ENCODE measurements at regions of chr1 and their contacts with region 1.

Region 1: GRCh38 chr1:31955917-31956736 is 18.0 kb upstream of the PTP4A2 start:
- DNase-seq: peak; percentile 93
- ATAC-seq: peak; percentile 82
- H3K4me3 Mint-ChIP-seq: peak overlapping the region; percentile 48
- H3K27ac Mint-ChIP-seq: peak overlapping the region; percentile 84
- H3K4me1 Mint-ChIP-seq: peaks cover 86% of the 10 kb centered on the region
- H3K27me3 Mint-ChIP-seq: no peaks in the 10 kb centered on the region

Region 2: DNA sequence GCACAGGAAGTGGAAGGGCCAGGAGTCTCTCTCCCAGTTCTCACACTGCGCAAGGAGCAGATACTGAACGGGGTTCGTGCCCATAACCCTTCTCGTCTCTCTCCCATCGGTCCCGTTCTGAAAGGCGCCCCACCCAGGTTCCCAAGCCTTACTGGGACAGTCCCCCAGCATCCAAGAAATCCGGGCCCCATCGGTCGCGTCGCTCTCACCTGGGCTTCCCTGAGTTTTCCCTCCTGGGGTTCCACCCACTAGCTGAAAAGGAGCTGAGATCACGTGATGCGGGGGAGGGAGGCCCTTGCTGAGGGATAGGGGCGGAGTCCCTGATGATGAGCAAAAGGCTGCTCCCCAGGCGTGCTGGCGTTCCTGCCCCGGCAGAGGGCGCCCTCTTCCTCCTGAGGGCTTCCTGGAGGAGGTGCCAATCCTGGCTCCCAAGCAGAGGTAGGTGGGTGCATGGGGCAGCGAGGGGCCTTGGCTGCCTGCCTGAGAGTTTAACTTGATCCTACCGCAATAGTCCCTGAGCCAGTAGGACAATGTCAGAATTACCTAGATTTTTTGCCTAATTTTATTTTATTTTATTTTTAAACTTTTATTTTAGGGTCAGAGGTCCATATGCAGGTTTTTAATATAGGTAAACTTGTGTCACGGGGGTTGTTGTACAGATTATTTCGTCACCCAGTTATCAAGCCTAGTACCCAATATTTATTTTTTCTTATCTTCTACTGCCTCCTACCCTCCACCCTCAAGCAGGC is 140.2 kb before region 1 on chr1 and contains the start of gene SPOCD1:
- CTCF ChIA-PET with region 1: interaction called, 110 read pairs
- DNase-seq: peak; percentile 92
- ATAC-seq: peak; percentile 94
- H3K4me3 Mint-ChIP-seq: no peak within 1 kb of the TSS
- H3K27ac Mint-ChIP-seq: no peak within 1 kb of the TSS
- H3K4me1 Mint-ChIP-seq: peaks cover 6% of the 10 kb centered on the region
- H3K27me3 Mint-ChIP-seq: no peaks in the 10 kb centered on the region
- total RNA-seq, gene SPOCD1: not detected

Region 3: DNA sequence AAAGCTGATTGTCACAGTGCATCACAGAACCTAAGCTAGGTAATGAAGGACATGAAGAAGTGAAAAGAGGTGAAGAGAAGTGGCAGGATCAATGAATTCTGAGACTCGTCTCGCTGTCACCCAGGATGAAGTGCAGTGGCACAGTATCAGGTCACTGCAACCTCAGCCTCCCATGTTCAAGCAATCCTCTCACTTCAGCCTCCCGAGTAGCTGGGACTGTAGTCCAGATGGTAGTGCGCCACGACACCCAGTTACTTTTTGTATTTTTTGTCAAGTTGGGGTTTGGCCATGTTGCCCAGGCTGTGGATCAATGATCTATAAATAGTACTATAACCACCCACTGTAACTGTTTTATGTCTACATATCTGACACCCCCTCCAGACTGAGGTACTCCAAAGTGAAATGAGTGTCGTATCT is 51.0 kb before region 1 on chr1:
- CTCF ChIA-PET with region 1: interaction called, 10 read pairs
- DNase-seq: no peak
- ATAC-seq: no peak
- H3K4me3 Mint-ChIP-seq: no peak overlapping the region
- H3K27ac Mint-ChIP-seq: no peak overlapping the region
- H3K4me1 Mint-ChIP-seq: peaks cover 35% of the 10 kb centered on the region
- H3K27me3 Mint-ChIP-seq: no peaks in the 10 kb centered on the region

Measured in activated CD8-positive, alpha-beta memory T cell treated with anti-CD3 and anti-CD28 coated beads, Interleukin-2, amount 10 ng/mL, durations not matched to agents 7 days and 5 days (primary cell).